ENCODE measurements at regions of chr1 and their contacts with region 1.

Region 1: GRCh38 chr1:94068999-94069918 is 51.7 kb downstream of the ABCA4 start:
- DNase-seq: peak in 2 of 3 donors; percentile 45 to 63
- H3K4me3 ChIP-seq: no peak overlapping the region
- H3K27ac ChIP-seq: no peak overlapping the region
- H3K4me1 ChIP-seq: peaks cover 18 to 35% (median 27%) of the 10 kb centered on the region in 4 experiments
- H3K27me3 ChIP-seq: peaks cover 0 to 1% (median 0%) of the 10 kb centered on the region in 5 experiments

Region 2: DNA sequence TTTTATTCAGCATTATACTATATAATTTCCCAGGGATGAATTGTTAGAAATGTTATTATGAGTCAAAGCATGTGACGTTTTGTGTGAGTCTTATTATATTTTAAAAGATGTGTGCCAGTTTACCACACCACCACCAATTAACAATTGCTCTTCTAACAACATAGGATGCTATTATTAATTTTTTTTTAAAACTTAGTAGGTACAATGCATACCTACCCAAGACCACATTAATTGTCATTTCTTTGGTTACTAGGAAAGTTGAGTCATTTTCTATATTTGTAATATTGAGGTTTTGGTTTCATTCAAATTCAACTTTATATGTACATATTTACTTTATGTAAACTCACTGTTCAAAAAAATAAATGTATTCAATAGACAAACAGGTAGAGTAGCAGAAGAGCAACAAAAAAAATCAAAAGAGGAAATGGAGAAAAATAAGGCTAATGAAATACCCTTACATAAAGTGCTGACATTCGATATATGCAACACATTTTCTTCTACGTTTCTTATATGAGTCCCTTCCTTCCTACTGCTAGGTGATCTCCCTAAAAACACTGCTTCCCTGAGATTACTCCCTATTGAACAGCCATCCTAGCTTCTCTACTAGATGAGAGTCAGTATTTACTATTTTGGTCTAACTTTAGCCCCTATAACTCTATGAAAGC is 169.6 kb before region 1 on chr1:
- CTCF ChIA-PET with region 1: no interaction called
- POLR2A ChIA-PET with region 1: no interaction called
- DNase-seq: no peak
- H3K4me3 ChIP-seq: no peak overlapping the region
- H3K27ac ChIP-seq: no peak overlapping the region
- H3K4me1 ChIP-seq: peaks cover 0 to 11% (median 5%) of the 10 kb centered on the region in 4 experiments
- H3K27me3 ChIP-seq: no peaks in the 10 kb centered on the region

Region 3: DNA sequence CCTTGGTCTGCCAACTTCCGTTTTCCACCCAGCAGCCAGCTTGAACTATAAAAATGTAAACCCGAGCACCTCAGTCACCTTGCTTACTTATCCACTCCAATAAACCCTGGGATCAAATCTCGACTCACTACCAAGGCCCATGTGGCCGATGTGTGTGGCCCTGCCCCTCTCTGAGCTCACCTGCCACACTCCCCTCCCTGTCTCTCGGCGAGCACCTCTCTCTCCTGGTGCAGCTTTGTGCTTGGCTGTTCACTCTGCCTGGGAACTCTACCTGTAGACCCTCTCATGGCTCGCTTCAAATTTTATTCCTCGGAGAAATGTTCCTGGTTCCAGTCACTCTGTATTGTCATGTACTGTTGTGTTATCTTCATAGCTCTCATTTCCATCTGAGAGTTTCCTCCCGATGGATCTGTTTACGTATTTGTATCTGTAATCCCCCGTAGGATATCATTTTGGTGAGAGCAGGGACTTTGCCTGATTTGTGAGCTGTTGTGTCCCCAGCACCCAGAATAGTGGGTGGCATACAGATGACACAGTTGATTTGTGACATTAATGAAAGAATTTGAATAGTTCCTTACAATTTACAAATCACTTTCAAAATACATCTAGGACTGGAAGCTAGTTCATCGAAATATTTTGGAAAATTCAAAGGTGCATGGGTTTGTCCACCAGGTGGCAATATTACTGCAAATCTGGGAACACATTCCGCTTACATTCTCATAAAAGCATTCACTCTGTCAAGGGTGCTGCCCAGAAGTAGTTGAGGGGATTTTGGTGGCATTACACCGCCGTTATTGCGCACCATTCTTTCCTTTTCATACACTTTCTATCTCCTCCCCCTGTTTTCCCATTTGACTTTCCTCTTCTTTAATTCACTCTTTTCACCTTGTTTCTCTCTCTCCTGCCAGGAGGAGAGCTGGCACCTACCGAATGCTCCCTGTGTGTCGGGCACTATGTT is 43.6 kb before region 1 on chr1:
- CTCF ChIA-PET with region 1: no interaction called
- POLR2A ChIA-PET with region 1: no interaction called
- DNase-seq: peak; percentile 64 to 77 (median 74)
- H3K4me3 ChIP-seq: no peak overlapping the region
- H3K27ac ChIP-seq: no peak overlapping the region
- H3K4me1 ChIP-seq: peaks cover 0 to 6% (median 2%) of the 10 kb centered on the region in 4 experiments
- H3K27me3 ChIP-seq: peaks cover 0 to 6% (median 0%) of the 10 kb centered on the region in 5 experiments

Region 4: DNA sequence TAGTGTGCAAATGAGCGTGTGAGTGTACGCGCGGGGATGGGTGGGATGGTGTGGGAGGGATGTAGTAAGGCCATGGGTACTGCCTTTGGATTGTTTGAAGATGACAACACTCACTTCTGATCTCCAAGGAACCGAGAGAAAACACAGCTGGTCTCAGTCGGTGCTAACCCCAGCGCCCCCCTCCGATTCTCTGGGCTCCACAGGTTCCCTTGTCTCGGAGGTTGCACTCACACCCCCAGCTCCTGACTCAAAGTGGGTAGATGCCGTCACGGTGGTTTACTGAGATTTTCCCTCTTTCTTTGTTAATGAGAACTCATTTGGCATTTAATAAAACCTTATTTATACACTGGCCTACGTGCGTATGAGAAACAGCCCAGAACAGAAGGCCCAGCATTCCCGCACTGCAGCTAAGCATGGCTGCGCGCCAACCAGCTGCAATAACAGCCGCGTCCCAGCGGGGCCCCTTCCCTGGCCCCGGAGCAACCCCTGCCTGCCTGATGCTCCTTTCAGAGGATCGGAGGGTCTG is 25.9 kb after region 1 on chr1:
- CTCF ChIA-PET with region 1: interaction called, 68 read pairs
- POLR2A ChIA-PET with region 1: interaction called, 3 read pairs
- DNase-seq: no peak
- H3K4me3 ChIP-seq: peak overlapping the region in 2 of 7 experiments; percentile 40 to 42
- H3K27ac ChIP-seq: no peak overlapping the region
- H3K4me1 ChIP-seq: peaks cover 32 to 57% (median 52%) of the 10 kb centered on the region in 4 experiments
- H3K27me3 ChIP-seq: peaks cover 0 to 9% (median 0%) of the 10 kb centered on the region in 5 experiments

Region 5: DNA sequence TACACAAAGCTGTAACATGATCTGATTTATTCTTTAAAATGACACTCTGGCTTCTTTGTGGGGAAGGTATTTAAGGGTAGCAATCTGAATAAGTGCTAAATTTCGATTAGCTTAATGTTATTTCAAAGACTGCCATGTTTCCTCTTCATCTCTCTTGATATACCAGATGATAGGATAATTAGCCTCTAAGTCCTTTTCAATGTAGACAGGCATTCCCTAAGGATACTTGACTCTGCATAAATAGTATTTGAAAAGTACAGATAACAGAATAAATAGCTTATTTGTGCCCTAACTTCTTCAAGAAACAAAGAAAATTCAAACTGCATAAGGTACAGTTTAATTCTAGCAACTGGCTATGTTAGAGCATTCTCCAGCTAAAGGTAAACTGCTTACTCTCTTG is 122.0 kb after region 1 on chr1:
- CTCF ChIA-PET with region 1: no interaction called
- POLR2A ChIA-PET with region 1: no interaction called
- DNase-seq: no peak
- H3K4me3 ChIP-seq: no peak overlapping the region
- H3K27ac ChIP-seq: no peak overlapping the region
- H3K4me1 ChIP-seq: no peaks in the 10 kb centered on the region
- H3K27me3 ChIP-seq: no peaks in the 10 kb centered on the region

Region 6: GRCh38 chr1:94258873-94259331 is 189.6 kb after region 1 on chr1:
- CTCF ChIA-PET with region 1: no interaction called
- POLR2A ChIA-PET with region 1: no interaction called
- DNase-seq: no peak
- H3K4me3 ChIP-seq: no peak overlapping the region
- H3K27ac ChIP-seq: no peak overlapping the region
- H3K4me1 ChIP-seq: no peaks in the 10 kb centered on the region
- H3K27me3 ChIP-seq: peaks cover 0 to 6% (median 0%) of the 10 kb centered on the region in 5 experiments